ENCODE measurements at regions of chr5 and their contacts with region 1.

Region 1: DNA sequence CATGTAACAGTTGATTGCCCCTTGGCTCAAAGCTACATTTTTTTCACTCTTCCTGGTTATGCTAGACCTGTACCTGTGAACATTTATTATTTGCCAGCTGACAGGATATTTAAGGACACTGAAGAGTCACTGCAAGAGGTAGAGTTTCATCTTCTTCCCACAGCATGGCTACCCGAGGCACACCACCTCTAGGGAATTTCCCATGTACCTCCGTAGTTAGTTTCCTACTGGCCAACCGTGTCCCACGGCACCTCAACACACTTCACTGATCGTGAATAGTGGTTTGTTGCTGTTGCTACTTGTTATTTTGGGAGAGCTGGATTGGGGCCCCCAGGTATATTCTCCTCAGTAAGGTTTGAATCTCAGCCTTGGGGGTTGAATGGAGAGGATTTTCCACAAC is 648.6 kb downstream of the SEMA5A start:
- DNase-seq: no peak
- H3K4me3 ChIP-seq: no peak overlapping the region
- H3K27ac ChIP-seq: no peak overlapping the region
- H3K4me1 ChIP-seq: no peaks in the 10 kb centered on the region
- H3K27me3 ChIP-seq: no peaks in the 10 kb centered on the region
- CTCF ChIP-seq: no peak
- POLR2A ChIP-seq: no peak

Region 2: DNA sequence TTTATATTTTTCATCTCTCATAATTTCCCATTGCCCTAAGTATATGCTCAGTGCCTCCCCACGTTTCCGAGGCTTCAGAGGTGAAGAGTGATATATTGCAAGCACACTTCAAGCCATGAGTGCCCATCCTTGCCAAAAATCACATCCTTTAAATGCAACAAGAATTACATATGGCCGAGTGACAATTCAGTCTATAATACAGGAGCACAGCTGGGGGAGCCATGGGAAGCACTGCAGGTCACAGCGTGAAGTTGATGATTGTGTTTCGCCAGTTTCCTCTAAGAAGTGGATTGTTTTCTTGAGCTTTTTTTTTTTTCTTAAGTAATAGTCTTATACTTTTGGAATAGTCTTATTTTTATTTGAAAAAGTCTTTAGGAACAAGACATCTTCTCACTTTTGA is 967.3 kb before region 1 on chr5:
- intact Hi-C with region 1: loop called (anchors 5 kb)
- DNase-seq: no peak
- H3K4me3 ChIP-seq: no peak overlapping the region
- H3K27ac ChIP-seq: no peak overlapping the region
- H3K4me1 ChIP-seq: no peaks in the 10 kb centered on the region
- H3K27me3 ChIP-seq: peaks cover 0 to 3% of the 10 kb centered on the region in 2 donors
- CTCF ChIP-seq: no peak
- POLR2A ChIP-seq: no peak

Measured in breast epithelium (tissue), 4 donors.